Astrocyte of the cerebellum (primary cell): ENCODE measurements at regions of chr15 and their contacts with region 1.

Region 1: DNA sequence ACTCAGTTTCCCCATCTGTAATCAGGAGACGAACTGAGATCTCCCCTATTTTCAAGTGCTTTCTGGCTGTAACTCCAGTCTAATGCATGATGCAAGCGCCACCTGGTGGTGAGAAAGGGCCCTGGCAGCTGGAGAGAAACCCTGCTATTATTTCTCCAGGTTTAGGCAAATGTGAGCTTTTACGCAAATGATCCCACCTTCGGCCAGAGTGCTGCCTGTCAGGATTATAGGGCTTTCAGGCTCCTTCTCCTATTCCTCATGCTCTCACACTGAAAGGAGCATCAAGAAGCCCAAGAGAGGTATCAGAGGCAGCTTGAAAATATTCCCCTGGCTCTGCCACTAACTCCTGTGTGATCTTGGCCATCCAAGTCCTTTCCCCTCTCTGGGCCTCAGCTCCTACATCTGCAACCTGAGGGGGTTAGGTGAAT is 93.9 kb upstream of the RASGRF1 start:
- DNase-seq: peak; percentile 35
- H3K4me3 ChIP-seq: no peak overlapping the region
- CTCF ChIP-seq: peak; percentile 96

Region 2: GRCh38 chr15:78880242-78880533 is 304.3 kb before region 1 on chr15:
- in situ Hi-C with region 1: loop called (anchors 25 kb)
- DNase-seq: no peak
- H3K4me3 ChIP-seq: no peak overlapping the region
- CTCF ChIP-seq: no peak

Region 3: GRCh38 chr15:79265987-79266579 is 81.6 kb after region 1 on chr15:
- in situ Hi-C with region 1: no loop called
- DNase-seq: no peak
- H3K4me3 ChIP-seq: no peak overlapping the region
- CTCF ChIP-seq: no peak